HEK293 (cell line): ENCODE measurements at regions of chr10 and their contacts with region 1.

Region 1: DNA sequence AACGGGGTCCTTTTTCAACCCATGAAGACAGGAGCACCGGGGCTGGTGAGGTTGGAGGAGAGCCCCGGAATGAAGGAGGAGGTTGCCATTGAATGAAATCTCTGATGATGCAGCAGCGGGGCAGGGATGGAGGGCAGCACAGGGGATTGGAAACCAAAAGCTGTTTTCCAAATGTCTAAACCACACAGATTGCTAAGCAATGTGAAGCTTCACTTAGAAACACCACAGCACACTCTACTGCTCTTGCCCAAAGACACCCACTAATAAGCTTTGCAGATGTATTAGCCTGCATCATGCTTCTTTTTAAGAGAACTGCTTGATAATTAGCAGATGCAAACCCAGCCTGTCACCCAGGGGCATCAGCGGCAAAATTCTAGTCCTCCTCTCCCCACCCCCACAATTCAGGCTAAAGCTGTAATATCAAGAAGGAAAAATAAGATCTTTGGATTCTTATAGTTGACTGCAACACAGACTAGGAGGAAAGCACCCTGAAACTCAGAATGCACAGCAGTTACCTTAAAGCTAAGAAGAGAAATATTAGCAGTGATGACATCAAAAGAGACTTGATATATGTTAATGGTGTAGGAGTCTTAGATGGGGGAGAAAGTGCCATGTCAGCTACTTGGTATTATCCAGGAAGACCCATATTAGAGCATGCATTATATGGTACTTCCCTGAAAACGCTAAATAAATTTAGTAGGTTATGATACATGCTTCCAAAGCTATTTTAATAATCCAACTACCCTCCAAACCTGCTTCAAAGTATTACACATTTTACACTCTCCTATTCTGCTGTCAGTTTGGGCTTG is 666.7 kb downstream of the KCNMA1 start:
- H3K4me3 ChIP-seq: no peak overlapping the region
- H3K27ac ChIP-seq: no peak overlapping the region
- H3K4me1 ChIP-seq: peaks cover 16% of the 10 kb centered on the region
- CTCF ChIP-seq: no peak

Region 2: DNA sequence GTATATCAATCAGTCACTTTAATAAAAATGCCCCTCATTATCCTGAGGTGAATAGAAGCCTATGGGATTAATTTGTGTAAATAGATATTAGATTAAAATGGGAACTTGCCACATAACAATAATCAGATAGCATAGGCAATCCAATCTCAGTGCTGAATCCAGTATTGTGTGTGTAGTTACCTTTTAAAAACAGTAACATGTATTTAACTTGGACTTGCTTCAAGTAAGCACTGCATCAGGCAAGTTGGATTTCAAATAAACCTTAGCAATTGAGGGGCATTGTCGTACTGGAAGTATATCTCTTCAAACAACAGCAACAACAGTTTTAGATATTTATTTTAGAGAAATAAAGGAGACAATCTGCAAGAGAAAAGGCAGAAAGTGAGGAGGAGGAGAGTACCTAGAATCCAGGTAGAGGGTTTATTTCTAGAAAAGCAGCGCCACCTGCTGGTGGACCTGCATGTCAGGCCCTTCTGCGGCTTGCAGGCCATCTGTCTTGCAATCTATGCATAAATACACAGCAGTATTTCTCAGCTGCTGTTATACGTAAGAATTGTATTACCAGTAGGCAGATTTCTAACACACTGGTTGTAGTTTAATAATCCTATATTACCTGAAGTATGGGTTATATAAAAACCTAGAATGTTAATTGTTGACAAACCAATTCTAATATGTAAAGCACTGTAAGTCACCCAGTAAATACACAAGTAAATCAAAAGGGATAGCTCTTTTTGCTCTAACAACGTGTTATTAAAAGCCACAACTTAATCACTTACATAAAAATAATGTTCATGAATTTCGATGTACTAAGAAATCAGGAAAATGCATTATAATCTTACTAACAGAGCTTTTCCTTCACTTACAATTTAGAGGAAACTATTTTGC is 13.9 kb after region 1 on chr10:
- CTCF ChIA-PET with region 1: interaction called, 11 read pairs
- POLR2A ChIA-PET with region 1: no interaction called
- H3K4me3 ChIP-seq: no peak overlapping the region
- H3K27ac ChIP-seq: no peak overlapping the region
- H3K4me1 ChIP-seq: no peaks in the 10 kb centered on the region
- CTCF ChIP-seq: 0 out of 2 replicates have a peak, but pooled peaks have one; percentile 51